Activated B cell treated with CpG ODN at 0.5 μM for 24 hours (primary cell): ENCODE measurements at regions of chr4 and their contacts with region 1.

Region 1: GRCh38 chr4:155809835-155810234 is 51.0 kb downstream of the GUCY1B1 start:
- DNase-seq: no peak
- ATAC-seq: peak; percentile 70
- H3K4me3 Mint-ChIP-seq: no peak overlapping the region
- H3K27ac Mint-ChIP-seq: no peak overlapping the region
- H3K4me1 Mint-ChIP-seq: no peaks in the 10 kb centered on the region
- H3K27me3 Mint-ChIP-seq: no peaks in the 10 kb centered on the region
- CTCF ChIP-seq: peak; percentile 69

Region 2: GRCh38 chr4:157204634-157205244 is 1394.9 kb after region 1 on chr4:
- CTCF ChIA-PET with region 1: no interaction called
- POLR2A ChIA-PET with region 1: no interaction called
- intact Hi-C with region 1: loop called (anchors 2 kb)
- DNase-seq: no peak
- ATAC-seq: no peak
- H3K4me3 Mint-ChIP-seq: no peak overlapping the region
- H3K27ac Mint-ChIP-seq: no peak overlapping the region
- H3K4me1 Mint-ChIP-seq: no peaks in the 10 kb centered on the region
- H3K27me3 Mint-ChIP-seq: no peaks in the 10 kb centered on the region
- CTCF ChIP-seq: no peak